ENCODE measurements at regions of chr1 and their contacts with region 1.

Region 1: DNA sequence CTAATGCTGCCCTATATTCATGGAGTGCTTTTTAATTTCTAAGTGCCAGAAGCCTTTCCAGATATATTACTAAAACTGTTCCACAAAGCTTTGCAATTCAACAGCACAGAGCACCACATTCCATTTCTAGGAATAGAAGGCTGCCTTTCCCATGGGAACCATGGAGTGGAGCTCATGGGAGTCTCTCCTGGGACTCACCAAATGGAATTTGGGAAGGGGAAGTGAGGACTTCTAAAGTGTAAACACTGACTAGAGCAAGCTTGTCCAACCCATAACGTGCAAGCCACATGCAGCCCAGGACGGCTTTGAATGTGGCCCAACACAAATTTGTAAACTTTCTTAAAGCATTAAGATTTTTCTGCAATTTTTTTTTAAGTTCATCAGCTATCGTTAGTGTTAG is 190.4 kb upstream of the TNR start:
- DNase-seq: no peak
- ATAC-seq: no peak
- H3K4me3 ChIP-seq: no peak overlapping the region
- H3K27ac ChIP-seq: no peak overlapping the region
- H3K4me1 ChIP-seq: no peaks in the 10 kb centered on the region
- H3K27me3 ChIP-seq: no peaks in the 10 kb centered on the region
- CTCF ChIP-seq: no peak

Region 2: GRCh38 chr1:174068000-174068399 is 1865.8 kb before region 1 on chr1:
- CTCF ChIA-PET with region 1: no interaction called
- POLR2A ChIA-PET with region 1: interaction called, 14 read pairs
- in situ Hi-C with region 1: no loop called
- intact Hi-C with region 1: no loop called
- DNase-seq: no peak
- ATAC-seq: no peak
- H3K4me3 ChIP-seq: no peak overlapping the region
- H3K27ac ChIP-seq: no peak overlapping the region
- H3K4me1 ChIP-seq: no peaks in the 10 kb centered on the region
- H3K27me3 ChIP-seq: no peaks in the 10 kb centered on the region
- CTCF ChIP-seq: no peak

Region 3: DNA sequence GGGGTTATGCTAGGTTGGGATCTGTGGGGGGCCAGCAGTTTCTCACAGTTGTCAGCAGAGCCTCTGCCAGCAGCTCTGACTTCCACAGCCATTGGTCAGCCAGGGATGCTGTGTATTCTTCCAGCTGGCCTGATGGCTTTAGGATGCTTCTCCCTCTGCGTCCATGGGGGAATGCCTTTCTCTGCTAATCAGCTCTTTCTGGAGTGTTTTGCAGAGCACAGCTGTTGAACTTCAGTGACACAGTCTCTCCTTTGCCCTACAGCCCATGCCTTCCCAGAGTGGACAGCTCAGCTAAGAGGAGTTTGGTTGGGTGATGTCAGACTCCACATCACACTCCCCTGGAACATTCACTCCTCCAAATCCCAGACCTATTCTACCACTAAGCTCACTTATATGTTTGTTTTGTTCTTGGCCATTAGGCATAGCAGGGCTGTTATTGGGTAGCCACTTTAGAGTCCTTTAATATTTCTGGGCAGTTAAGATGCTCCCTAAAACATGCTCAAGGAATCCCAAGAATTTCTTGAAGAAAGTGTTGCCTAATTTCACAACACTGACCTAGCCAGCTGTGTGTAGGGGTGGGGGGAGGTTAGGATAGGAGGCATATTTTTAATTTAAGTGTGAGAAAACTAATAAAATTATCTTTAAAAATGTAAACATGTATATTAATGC is 666.0 kb before region 1 on chr1:
- CTCF ChIA-PET with region 1: no interaction called
- POLR2A ChIA-PET with region 1: no interaction called
- in situ Hi-C with region 1: no loop called
- intact Hi-C with region 1: no loop called
- DNase-seq: no peak
- ATAC-seq: no peak
- H3K4me3 ChIP-seq: no peak overlapping the region
- H3K27ac ChIP-seq: no peak overlapping the region
- H3K4me1 ChIP-seq: no peaks in the 10 kb centered on the region
- H3K27me3 ChIP-seq: no peaks in the 10 kb centered on the region
- CTCF ChIP-seq: no peak